ENCODE measurements at regions of chr17 and their contacts with region 1.

Region 1: GRCh38 chr17:40139566-40140058 is 725 bp upstream of the CASC3 start:
- H3K4me3 ChIP-seq: peak overlapping the region; percentile 37
- H3K27ac ChIP-seq: peak overlapping the region; percentile 85
- H3K4me1 ChIP-seq: peaks cover 8% of the 10 kb centered on the region
- CTCF ChIP-seq: no peak

Region 2: GRCh38 chr17:39813631-39814030 is 326.0 kb before region 1 on chr17:
- CTCF ChIA-PET with region 1: no interaction called
- POLR2A ChIA-PET with region 1: no interaction called
- H3K4me3 ChIP-seq: no peak overlapping the region
- H3K27ac ChIP-seq: no peak overlapping the region
- H3K4me1 ChIP-seq: peaks cover 4% of the 10 kb centered on the region
- CTCF ChIP-seq: no peak

Region 3: GRCh38 chr17:40157973-40158372 is 18.4 kb after region 1 on chr17:
- CTCF ChIA-PET with region 1: no interaction called
- POLR2A ChIA-PET with region 1: interaction called, 17 read pairs
- H3K4me3 ChIP-seq: no peak overlapping the region
- H3K27ac ChIP-seq: no peak overlapping the region
- H3K4me1 ChIP-seq: no peaks in the 10 kb centered on the region
- CTCF ChIP-seq: no peak